ENCODE measurements at regions of chr12 and their contacts with region 1.

Region 1: GRCh38 chr12:48681738-48682532 is at the start of gene KANSL2:
- DNase-seq: peak; percentile 95 to 99 (median 97)
- ATAC-seq: peak; percentile 98
- H3K4me3 ChIP-seq: peak within 1 kb of the TSS; percentile 99
- H3K27ac ChIP-seq: peak within 1 kb of the TSS; percentile 97
- H3K4me1 ChIP-seq: peaks cover 9 to 21% of the 10 kb centered on the region in 2 experiments; a peak in 4 of 5 replicates
- H3K27me3 ChIP-seq: no peaks in the 10 kb centered on the region
- CTCF ChIP-seq: no peak
- EP300 ChIP-seq: no peak
- POLR2A ChIP-seq: peak; percentile 99
- RAD21 ChIP-seq: no peak
- polyA plus RNA-seq, gene KANSL2: 80.0 to 89.8 TPM

Region 2: DNA sequence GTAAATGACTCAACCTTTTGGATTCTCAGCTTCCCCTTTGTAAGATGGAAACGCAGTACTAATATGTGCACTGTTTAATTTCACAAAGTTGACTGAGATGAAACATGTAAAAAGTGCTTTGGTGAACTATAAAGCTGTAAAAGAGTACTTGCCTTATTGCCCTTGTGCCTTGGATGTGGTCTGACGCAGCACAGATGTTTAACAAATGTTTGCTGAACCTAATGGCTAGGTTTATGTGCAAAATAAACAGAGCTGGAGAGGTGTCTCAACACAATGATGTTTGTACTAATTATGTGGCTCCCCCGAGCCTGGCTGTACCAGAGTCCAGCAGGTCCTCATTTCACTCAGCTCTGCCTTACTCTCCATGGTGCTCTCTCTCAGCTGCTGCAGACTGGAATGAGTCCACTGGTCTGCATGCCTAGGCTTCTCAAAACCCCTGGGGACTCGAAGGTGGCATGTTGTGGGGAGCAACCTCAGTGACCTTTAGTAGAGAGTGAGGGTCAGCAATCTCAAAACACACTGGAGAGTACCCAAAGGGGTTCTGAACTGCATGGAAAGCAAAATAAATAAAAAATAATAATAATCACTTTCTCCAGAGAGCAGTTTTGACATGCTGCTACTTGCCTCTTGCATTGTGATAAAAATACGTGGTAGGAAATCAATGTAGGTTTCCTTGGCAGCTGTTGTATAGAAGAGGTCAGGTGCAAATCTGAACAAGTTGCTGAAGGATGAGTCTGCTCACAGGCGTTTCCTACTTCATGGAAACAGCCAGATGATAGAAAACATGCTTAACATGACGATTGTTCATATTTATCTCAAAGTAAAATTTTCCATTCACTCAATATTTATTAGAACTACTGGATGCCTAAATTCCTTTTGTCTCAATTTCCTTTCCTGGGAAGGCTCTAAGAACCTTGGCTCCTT is 1593.7 kb before region 1 on chr12:
- CTCF ChIA-PET with region 1: no interaction called
- POLR2A ChIA-PET with region 1: no interaction called
- in situ Hi-C with region 1: no loop called
- intact Hi-C with region 1: no loop called
- DNase-seq: no peak
- ATAC-seq: no peak
- H3K4me3 ChIP-seq: no peak overlapping the region
- H3K27ac ChIP-seq: no peak overlapping the region
- H3K4me1 ChIP-seq: peaks cover 3 to 15% of the 10 kb centered on the region in 2 experiments; a peak in 4 of 5 replicates
- H3K27me3 ChIP-seq: no peaks in the 10 kb centered on the region
- CTCF ChIP-seq: no peak
- EP300 ChIP-seq: no peak
- POLR2A ChIP-seq: no peak
- RAD21 ChIP-seq: no peak

Region 3: DNA sequence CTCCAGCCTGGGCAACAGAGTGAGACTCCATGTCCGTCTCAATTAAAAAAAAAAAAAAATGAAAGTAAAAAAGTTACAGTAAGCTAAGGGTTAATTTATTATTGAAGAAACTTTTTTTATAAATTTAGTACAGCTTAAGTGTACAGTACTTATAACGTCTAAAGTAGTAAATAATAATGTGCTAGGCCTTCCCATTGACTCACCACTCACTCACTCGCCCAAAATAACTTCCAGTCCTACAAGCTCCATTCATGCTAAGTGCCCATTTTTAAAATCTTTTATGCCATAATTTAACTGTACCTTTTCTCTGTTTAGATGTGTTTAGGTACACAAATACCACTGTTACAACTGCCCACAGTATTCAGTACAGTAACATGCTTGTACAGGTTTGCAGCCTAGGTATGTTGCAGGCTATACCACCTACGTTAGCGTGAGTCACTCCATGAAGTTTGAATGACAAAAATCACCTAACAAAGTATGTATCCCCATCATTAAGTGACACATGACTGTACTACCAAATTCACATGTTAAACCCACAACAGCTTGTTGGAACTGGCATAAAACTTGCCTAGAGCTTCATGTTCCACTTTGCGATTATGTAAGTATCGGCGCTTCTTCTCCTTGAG is 10.6 kb before region 1 on chr12:
- CTCF ChIA-PET with region 1: no interaction called
- POLR2A ChIA-PET with region 1: interaction called, 45 read pairs
- in situ Hi-C with region 1: no loop called
- intact Hi-C with region 1: no loop called
- DNase-seq: no peak
- ATAC-seq: no peak
- H3K4me3 ChIP-seq: no peak overlapping the region
- H3K27ac ChIP-seq: no peak overlapping the region
- H3K4me1 ChIP-seq: no peaks in the 10 kb centered on the region
- H3K27me3 ChIP-seq: no peaks in the 10 kb centered on the region
- CTCF ChIP-seq: no peak
- EP300 ChIP-seq: no peak
- POLR2A ChIP-seq: no peak
- RAD21 ChIP-seq: no peak

Region 4: DNA sequence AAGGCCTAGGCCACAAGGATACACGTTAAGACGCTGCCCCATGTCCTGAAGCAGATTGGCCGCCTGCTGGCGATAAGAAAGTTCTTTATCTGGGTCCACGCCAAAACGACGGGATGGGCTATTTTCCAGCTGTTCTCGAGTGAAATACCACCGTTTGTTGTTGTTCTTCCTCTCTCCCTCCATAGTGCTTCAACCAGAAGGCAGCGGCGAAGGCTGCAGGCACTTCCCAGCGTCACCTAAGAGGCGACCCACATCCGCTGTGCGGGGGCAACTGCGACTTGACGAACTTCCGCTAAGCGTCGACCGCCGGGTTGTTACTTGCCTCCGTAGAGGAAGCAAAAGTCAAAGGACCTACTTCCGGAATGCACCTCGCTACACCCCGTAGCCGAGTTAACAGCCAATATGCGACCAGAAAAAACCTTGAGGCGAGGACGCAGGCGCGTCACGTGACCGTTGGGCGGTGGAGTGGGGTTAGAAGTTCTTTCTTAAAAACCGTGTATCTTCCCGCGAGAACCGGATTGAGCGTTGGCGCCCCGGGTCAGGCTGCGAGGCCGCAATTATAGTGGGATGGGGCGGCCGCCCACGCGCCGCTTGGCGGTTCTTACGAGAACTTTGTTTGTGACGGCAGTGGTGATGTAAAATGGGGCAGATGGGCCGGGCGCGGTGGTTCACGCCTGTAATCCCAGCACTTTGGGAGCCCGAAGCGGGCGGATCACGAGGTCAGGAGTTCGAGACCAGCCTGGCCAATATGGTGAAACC is 34.7 kb after region 1 on chr12 and contains the start of gene CCNT1:
- CTCF ChIA-PET with region 1: no interaction called
- POLR2A ChIA-PET with region 1: interaction called, 17 read pairs
- in situ Hi-C with region 1: no loop called
- intact Hi-C with region 1: loop called (anchors 2 kb)
- DNase-seq: peak; percentile 95 to 100 (median 97)
- ATAC-seq: peak; percentile 95
- H3K4me3 ChIP-seq: peak within 1 kb of the TSS; percentile 94
- H3K27ac ChIP-seq: peak within 1 kb of the TSS; percentile 98
- H3K4me1 ChIP-seq: peaks cover 5 to 14% of the 10 kb centered on the region in 2 experiments; a peak in 4 of 5 replicates
- H3K27me3 ChIP-seq: no peaks in the 10 kb centered on the region
- CTCF ChIP-seq: peak; percentile 7 to 45 (median 14); a peak in 2 of 6 replicates
- EP300 ChIP-seq: 0 out of 2 replicates have a peak, but pooled peaks have one; percentile 49
- POLR2A ChIP-seq: peak; percentile 93
- RAD21 ChIP-seq: no peak; a peak in 1 of 4 replicates
- polyA plus RNA-seq, gene CCNT1: 9.7 to 10.5 TPM

Region 5: DNA sequence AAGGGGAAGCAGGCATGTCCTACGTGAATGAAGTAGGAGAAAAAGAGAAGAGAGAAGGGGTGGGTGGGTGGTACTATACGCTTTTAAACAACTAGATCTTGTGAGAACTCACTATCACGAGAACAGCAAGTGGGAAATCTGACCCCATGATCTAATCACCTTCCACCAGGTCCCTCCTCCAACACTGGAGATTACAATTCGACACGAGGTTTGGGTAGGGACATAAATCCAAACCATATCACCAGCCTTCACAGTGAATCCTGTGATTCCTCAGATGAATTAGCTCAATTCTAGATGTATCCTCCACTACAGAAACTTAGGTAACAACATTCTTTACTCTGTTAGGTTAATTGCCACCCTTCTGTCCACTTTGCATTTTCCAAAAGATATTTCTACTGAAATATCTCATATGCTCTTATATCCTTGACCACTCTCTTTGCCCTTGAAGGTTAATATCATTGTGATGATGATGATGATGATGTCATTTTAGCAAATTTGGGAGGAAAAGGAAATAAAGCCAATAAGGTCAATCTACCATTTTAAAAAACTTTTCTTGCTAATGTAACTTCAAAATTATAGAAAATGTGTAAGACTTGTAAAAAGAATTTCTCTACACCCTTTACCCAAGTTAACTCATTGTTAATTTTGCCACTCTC is 57.8 kb after region 1 on chr12:
- CTCF ChIA-PET with region 1: no interaction called
- POLR2A ChIA-PET with region 1: no interaction called
- in situ Hi-C with region 1: no loop called
- intact Hi-C with region 1: no loop called
- DNase-seq: no peak
- ATAC-seq: no peak
- H3K4me3 ChIP-seq: no peak overlapping the region
- H3K27ac ChIP-seq: no peak overlapping the region
- H3K4me1 ChIP-seq: no peaks in the 10 kb centered on the region
- H3K27me3 ChIP-seq: peaks cover 6 to 13% of the 10 kb centered on the region in 2 experiments; a peak in 3 of 5 replicates
- CTCF ChIP-seq: no peak
- EP300 ChIP-seq: no peak
- POLR2A ChIP-seq: no peak
- RAD21 ChIP-seq: no peak

Region 6: GRCh38 chr12:48957141-48958048 is 275.5 kb after region 1 on chr12 and contains the start of gene ARF3:
- CTCF ChIA-PET with region 1: no interaction called
- POLR2A ChIA-PET with region 1: no interaction called
- in situ Hi-C with region 1: no loop called
- intact Hi-C with region 1: no loop called
- DNase-seq: peak; percentile 96 to 97 (median 97)
- ATAC-seq: peak; percentile 94
- H3K4me3 ChIP-seq: peak within 1 kb of the TSS; percentile 89
- H3K27ac ChIP-seq: peak within 1 kb of the TSS; percentile 71
- H3K4me1 ChIP-seq: peaks cover 9 to 20% of the 10 kb centered on the region in 2 experiments; a peak in 4 of 5 replicates
- H3K27me3 ChIP-seq: no peaks in the 10 kb centered on the region
- CTCF ChIP-seq: peak in 2 of 3 experiments; percentile 4 to 48; a peak in 2 of 6 replicates
- EP300 ChIP-seq: no peak
- POLR2A ChIP-seq: peak; percentile 85
- RAD21 ChIP-seq: no peak
- polyA plus RNA-seq, gene ARF3: 5.9 to 7.4 TPM

Measured in K562 (cell line).